Pancreas (tissue), 10 donors: ENCODE measurements at regions of chr11 and their contacts with region 1.

Region 1: GRCh38 chr11:94897330-94897768 is 76.0 kb downstream of the CWC15 start:
- DNase-seq: peak in 4 of 6 donors; percentile 21 to 63 (median 50)
- ATAC-seq: peak in 3 of 4 donors; percentile 72 to 91 (median 80)
- H3K4me3 ChIP-seq: no peak overlapping the region
- H3K27ac ChIP-seq: no peak overlapping the region
- H3K4me1 ChIP-seq: no peaks in the 10 kb centered on the region
- H3K27me3 ChIP-seq: no peaks in the 10 kb centered on the region
- CTCF ChIP-seq: peak; percentile 66 to 78 (median 68)

Region 2: GRCh38 chr11:94629741-94630140 is 267.6 kb before region 1 on chr11:
- intact Hi-C with region 1: loop called in 1 of 3 experiments (anchors 5 kb)
- DNase-seq: no peak
- ATAC-seq: no peak
- H3K4me3 ChIP-seq: no peak overlapping the region
- H3K27ac ChIP-seq: no peak overlapping the region
- H3K4me1 ChIP-seq: no peaks in the 10 kb centered on the region
- H3K27me3 ChIP-seq: no peaks in the 10 kb centered on the region
- CTCF ChIP-seq: no peak

Region 3: DNA sequence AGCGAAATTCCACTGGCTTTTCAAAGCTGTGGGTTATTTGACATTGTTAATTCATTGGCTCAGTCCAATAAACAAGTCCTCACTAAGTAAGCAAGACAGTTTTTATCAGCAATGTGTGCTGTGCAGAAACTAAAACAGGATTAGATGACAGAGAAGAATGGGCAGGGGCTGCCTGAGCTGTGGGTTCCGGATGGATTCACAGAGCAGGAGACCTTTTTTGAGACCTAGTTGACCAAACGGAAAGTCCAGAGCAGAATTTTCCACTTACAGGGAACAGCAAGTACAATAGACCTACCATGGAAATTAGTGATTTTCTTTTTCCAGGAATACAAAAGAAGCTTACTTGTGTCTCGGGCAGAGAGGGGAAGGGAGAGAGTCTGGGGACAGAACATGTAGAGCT is 146.7 kb after region 1 on chr11:
- intact Hi-C with region 1: no loop called
- DNase-seq: no peak
- ATAC-seq: no peak
- H3K4me3 ChIP-seq: no peak overlapping the region
- H3K27ac ChIP-seq: no peak overlapping the region
- H3K4me1 ChIP-seq: no peaks in the 10 kb centered on the region
- H3K27me3 ChIP-seq: no peaks in the 10 kb centered on the region
- CTCF ChIP-seq: no peak